Mucosa of descending colon (tissue), 3 donors: ENCODE measurements at regions of chr4 and their contacts with region 1.

Region 1: GRCh38 chr4:163332500-163333406 is at the start of gene NPY1R:
- DNase-seq: peak; percentile 62 to 89 (median 81)
- ATAC-seq: peak; percentile 92
- H3K4me3 ChIP-seq: peak within 1 kb of the TSS; percentile 18
- H3K4me1 ChIP-seq: peaks cover 5% of the 10 kb centered on the region
- CTCF ChIP-seq: peak; percentile 22
- total RNA-seq, gene NPY1R: 2.8 to 20.6 (median 5.5) TPM

Region 2: DNA sequence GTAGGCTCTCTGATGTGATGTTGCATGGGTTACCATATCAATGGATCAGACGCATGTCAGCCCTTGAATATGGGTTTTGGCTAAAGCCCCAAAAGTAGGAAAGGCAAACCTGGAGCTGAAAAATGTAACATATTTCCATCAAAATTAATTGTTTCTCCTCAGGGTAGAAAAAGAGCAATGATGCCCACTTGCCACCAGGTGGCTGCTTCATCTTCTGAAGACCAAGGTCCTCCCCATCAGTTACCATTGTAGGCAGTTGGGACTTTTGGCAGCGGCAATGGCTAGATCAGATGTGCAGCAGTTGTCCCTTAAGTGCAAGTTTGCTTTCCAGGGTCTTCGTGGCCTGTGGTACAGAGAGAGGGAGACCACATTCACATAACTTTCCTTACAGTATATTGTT is 284.3 kb before region 1 on chr4:
- intact Hi-C with region 1: loop called in 1 of 2 experiments (anchors 10 kb)
- DNase-seq: peak in 1 of 3 donors; percentile 27
- ATAC-seq: peak; percentile 55
- H3K4me3 ChIP-seq: no peak overlapping the region
- H3K4me1 ChIP-seq: no peaks in the 10 kb centered on the region
- CTCF ChIP-seq: no peak